PC-9 (cell line): ENCODE measurements at regions of chr12 and their contacts with region 1.

Region 1: DNA sequence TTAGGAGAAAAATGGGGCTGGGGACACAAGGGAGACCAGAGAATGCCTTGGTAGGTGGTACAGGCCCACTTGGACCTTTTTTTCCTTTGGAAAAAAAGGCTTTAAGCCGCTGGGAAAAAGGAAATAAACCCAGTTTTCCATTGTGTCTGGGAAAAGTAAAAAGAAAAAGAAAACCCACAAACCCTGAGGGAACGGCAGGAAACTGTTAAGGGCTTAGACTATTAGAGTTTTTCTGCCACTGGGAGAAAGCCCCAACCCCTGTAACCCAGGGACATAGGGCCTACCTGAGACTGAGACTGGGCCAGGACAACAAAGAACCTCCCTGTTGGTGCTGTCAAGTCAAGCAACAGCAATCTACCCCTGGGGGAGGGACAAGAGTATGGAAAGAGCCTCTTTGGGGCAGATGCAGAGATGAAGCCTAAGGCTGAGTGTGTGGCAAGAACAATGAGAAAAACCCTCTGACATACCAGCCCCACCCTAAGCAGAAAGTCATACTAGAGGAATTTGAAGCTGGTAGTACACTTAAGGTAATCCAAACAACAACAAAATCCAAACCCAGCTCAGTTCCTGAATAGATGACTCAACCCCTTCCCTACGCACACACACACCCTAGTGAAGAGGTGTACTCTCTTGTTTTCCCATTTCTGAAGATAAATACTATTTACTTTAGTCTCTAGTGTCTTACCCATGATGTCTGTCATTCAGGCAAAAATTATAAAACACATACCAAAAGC is 22.8 kb downstream of the ATF1 start:
- DNase-seq: peak; percentile 73 to 99
- H3K4me3 ChIP-seq: no peak overlapping the region
- H3K27ac ChIP-seq: peak overlapping the region; percentile 90
- H3K4me1 ChIP-seq: peaks cover 40% of the 10 kb centered on the region
- H3K27me3 ChIP-seq: no peaks in the 10 kb centered on the region
- CTCF ChIP-seq: no peak

Region 2: DNA sequence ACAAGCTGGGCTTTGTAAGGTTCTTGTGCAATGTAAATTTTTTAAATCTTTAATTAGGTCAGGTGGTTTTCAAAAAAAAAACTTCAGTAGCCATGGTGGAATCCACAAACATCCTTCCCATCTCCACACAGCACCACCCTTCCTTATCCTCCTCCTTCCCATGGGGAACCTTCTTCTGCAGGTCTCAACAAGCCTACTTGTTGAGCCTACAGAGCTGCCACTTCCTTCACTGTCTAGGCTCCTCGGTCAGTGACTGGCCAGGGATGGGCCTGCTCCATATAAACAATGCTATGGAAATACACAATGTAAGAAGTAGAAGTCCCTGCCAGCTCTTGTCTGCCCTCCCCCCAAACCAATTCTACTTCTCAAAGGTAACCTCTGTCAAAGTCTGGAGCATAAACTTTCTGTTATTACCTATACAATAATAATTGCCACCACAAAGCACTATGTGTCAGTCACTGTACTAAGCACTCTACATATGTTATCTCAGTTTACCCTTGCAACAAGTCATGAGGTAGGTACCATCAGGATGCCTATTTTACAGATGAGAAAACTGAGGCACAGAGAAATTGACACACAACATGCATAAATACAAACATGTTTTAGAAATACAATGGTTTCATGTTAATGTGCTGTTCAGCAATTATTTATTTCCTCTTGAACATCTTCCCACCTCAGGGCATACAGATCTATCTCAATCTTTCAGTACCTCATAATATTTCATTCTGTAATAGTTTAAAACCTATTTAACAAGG is 520.7 kb before region 1 on chr12:
- CTCF ChIA-PET with region 1: no interaction called
- POLR2A ChIA-PET with region 1: interaction called, 11 read pairs
- intact Hi-C with region 1: no loop called
- DNase-seq: no peak
- H3K4me3 ChIP-seq: no peak overlapping the region
- H3K27ac ChIP-seq: no peak overlapping the region
- H3K4me1 ChIP-seq: no peaks in the 10 kb centered on the region
- H3K27me3 ChIP-seq: no peaks in the 10 kb centered on the region
- CTCF ChIP-seq: no peak

Region 3: GRCh38 chr12:51217968-51218606 is 431.4 kb after region 1 on chr12 and contains the start of gene POU6F1:
- CTCF ChIA-PET with region 1: interaction called, 10 read pairs
- POLR2A ChIA-PET with region 1: no interaction called
- intact Hi-C with region 1: no loop called
- DNase-seq: peak; percentile 62 to 63
- H3K4me3 ChIP-seq: peak within 1 kb of the TSS; percentile 70
- H3K27ac ChIP-seq: no peak within 1 kb of the TSS
- H3K4me1 ChIP-seq: peaks cover 9% of the 10 kb centered on the region
- H3K27me3 ChIP-seq: no peaks in the 10 kb centered on the region
- CTCF ChIP-seq: peak; percentile 69
- total RNA-seq, gene POU6F1: 5.3 and 7.0 TPM in 2 replicates